T-cell (primary cell): ENCODE measurements at regions of chr20 and their contacts with region 1.

Region 1: DNA sequence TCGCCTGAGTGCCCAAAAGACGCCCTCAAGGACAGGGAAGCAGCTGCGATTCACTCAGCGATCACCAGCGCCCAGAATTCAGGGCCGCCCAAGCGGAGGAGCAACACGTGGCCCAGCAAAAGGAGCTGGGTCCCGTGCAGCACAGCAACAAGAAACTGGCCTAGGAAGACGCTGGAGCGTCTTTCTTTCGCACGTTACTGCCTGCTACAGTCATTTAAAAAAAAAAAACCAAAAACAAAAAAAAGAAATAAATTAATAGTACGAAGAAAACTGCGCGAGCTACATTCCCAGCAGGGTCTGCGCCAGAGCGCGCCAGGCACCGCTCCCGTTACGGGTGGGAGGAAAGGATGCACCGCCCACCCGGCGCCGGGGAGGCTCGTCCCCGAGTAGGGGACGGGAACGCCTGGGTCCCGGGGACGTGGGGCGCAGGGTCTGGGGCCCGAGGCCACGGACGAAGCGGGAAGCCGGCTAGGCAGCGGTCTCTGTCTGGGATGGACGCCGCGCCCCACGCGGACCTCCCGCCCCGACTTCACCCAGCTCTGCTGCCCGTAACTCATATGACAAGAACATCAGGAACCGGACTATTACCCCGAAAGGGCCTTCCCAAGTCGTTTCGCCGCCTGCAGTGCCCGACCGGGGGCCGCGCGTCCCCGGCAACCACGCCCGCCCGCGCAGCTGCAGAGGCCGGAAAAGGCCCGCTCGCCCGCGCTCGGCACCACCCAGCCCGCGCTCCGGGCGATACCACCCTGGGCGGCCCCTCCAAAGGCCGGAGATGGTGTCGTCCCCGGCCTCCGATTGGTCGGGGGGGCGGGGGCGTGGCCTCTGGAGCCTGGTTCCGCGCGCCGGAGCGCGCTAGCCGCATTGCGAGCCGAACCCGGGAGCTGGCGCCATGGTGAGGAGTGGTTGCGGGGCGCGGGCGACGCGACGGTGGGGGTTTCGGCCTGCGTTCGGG is at the start of gene NOP56:
- DNase-seq: peak; percentile 78 to 97 (median 91)
- ATAC-seq: peak; percentile 86 to 94 (median 90)
- H3K4me3 ChIP-seq: peak within 1 kb of the TSS; percentile 80 to 82
- H3K4me3 Mint-ChIP-seq: peak within 1 kb of the TSS; percentile 85 to 90 (median 86)
- H3K27ac ChIP-seq: peak within 1 kb of the TSS; percentile 32
- H3K27ac Mint-ChIP-seq: peak within 1 kb of the TSS; percentile 88 to 90
- H3K4me1 ChIP-seq: peaks cover 17 to 31% of the 10 kb centered on the region in 2 experiments
- H3K4me1 Mint-ChIP-seq: peaks cover 38 to 51% (median 44%) of the 10 kb centered on the region in 3 donors
- H3K27me3 ChIP-seq: no peaks in the 10 kb centered on the region
- H3K27me3 Mint-ChIP-seq: no peaks in the 10 kb centered on the region
- total RNA-seq, gene NOP56: 243 to 279 (median 270) TPM

Region 2: DNA sequence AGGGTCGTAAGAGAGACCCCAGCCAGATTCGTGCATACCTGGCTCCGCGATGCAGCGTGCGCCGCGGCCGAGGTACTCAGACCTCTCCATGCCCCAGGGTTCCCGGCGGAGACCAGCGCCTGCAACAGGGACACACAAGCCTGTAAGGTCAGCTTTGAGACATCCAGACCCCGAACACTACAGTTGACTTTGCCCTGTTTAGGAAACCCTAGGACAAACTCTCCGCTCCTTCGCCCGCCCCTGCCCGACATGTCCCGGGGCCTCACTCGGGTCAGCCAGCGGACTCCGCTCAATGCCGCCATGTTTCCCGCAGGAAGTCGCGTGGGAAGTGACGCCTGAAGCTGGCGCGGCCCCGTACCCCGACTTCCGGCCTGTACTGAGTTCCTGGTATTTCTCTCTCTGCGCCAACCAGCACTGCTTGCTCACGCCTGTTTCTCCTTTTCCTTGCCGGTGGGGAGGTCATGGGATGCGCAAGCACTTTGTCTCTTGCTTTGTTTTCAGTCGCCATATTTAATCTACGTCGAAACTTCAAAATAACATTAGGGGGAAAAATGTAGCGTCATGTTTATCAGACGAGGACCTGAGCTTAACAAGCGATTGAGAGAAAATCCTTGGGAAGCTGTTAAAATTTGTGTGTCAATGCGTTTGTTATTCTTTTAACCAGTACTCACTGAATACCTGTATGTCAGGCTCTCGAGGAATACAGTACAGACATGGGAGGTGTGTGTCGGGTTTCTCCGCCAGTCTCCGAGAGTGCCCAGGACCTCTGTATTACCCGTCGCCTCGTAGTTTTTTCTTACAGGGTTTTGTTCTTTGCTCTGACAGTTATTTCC is 12.1 kb after region 1 on chr20 and contains the start of gene IDH3B:
- CTCF ChIA-PET with region 1: interaction called in 1 of 2 experiments, 12 read pairs
- POLR2A ChIA-PET with region 1: interaction called in 1 of 2 experiments, 20 read pairs
- DNase-seq: peak; percentile 78 to 94 (median 91)
- ATAC-seq: peak; percentile 93 to 99 (median 94)
- H3K4me3 ChIP-seq: peak within 1 kb of the TSS; percentile 84 to 85
- H3K4me3 Mint-ChIP-seq: peak within 1 kb of the TSS; percentile 86 to 93 (median 91)
- H3K27ac ChIP-seq: peak within 1 kb of the TSS; percentile 97
- H3K27ac Mint-ChIP-seq: peak within 1 kb of the TSS; percentile 98 to 99
- H3K4me1 ChIP-seq: peaks cover 7 to 18% of the 10 kb centered on the region in 2 experiments
- H3K4me1 Mint-ChIP-seq: peaks cover 22 to 28% (median 23%) of the 10 kb centered on the region in 3 donors
- H3K27me3 ChIP-seq: no peaks in the 10 kb centered on the region
- H3K27me3 Mint-ChIP-seq: peaks cover 0 to 5% of the 10 kb centered on the region in 2 donors
- total RNA-seq, gene IDH3B: 101 to 147 (median 117) TPM